Dorsolateral prefrontal cortex (tissue), 120 donors: ENCODE measurements at regions of chr10 and their contacts with region 1.

Region 1: GRCh38 chr10:71945819-71946474 is 18.2 kb upstream of the CHST3 start:
- DNase-seq: no peak
- H3K4me3 ChIP-seq: no peak overlapping the region
- H3K27ac ChIP-seq: no peak overlapping the region
- H3K27me3 ChIP-seq: peaks cover 0 to 2% (median 0%) of the 10 kb centered on the region in 45 donors
- CTCF ChIP-seq: no peak

Region 2: GRCh38 chr10:71909399-71910083 is 36.4 kb before region 1 on chr10:
- intact Hi-C with region 1: loop called in 1 of 2 experiments (anchors 5 kb)
- DNase-seq: no peak
- H3K4me3 ChIP-seq: no peak overlapping the region
- H3K27ac ChIP-seq: no peak overlapping the region
- H3K27me3 ChIP-seq: no peaks in the 10 kb centered on the region
- CTCF ChIP-seq: no peak

Region 3: DNA sequence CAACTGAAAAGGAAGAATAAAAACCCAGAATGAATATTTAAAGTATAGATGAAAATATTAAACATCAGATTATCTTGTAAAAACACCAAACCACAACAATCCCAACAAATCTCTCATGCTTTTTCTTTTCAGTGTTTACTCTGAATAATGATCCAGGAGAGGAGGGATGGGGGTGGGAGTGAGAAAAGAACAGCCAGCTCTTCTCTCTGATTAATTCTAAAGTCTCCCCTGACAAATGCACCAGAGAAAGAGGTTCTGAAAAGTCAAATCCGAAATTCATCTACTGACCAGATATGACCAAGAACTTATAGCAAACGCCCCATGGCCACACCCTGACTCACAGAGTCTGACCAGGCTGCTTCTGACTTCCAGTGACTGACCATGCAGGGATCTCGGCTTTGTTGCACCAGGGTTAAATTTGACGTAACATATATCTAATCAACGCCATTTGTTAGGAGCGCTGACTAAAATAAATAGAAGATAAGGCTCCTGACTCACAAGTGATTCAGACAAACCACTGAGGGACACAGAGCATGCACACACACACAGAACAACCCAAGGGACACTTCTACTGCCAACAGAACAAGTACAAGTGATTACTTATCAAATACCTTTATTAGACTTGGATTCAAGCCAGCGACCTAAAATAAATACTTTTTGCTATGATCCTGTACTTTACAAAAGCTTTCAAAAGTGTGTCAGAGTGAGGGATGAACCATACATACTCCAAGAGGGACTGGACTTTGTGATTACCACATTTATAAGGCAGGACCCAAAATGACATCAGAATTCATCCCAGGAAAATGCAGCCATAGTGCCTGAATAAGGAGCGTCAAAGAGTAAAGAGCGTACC is 151.7 kb after region 1 on chr10:
- intact Hi-C with region 1: no loop called
- DNase-seq: no peak
- H3K4me3 ChIP-seq: no peak overlapping the region
- H3K27ac ChIP-seq: peak overlapping the region in 9 of 59 donors; percentile 11 to 42 (median 22)
- H3K27me3 ChIP-seq: no peaks in the 10 kb centered on the region
- CTCF ChIP-seq: no peak